HCT116 (cell line): ENCODE measurements at regions of chr4 and their contacts with region 1.

Region 1: DNA sequence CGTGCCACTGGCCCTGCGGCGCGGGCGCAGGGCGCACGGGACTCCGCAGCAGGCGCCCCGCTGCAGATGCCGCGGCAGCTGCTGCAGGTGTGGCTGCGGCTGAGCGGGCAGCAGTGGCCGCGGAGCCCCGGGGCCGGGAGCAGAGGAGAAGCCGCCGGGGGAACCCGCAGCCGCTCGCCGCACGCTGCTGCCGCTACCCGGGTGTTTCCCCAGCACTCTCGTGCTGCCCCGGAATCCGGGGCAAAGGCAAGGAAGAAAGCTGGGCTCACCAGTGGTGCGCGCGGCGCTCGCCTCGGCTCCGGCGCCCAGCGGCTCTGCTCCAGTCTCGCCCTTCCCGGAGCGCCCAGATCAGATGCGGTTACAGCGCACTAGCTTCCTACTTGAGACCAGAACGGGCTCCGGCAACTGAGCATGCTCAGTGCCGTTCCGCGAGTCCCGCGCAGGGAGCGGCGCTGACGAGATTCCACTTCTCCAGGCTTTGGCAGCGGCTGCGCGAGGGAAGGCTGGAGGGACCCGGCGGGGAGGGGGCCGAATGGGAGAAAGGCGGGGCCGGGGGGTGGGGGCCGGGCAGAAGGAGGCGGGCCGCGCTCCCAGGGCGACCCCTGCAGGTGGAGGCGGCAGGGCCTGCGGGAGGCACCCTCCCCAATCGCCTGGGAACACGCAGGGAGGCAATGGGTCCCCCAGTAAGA is at the start of gene APBB2:
- DNase-seq: peak; percentile 93
- ATAC-seq: peak; percentile 78
- H3K4me3 ChIP-seq: peak within 1 kb of the TSS; percentile 91 to 92
- H3K27ac ChIP-seq: peak within 1 kb of the TSS; percentile 82
- H3K4me1 ChIP-seq: peaks cover 36 to 56% of the 10 kb centered on the region in 2 experiments
- H3K27me3 ChIP-seq: no peaks in the 10 kb centered on the region
- CTCF ChIP-seq: peak in 2 of 3 experiments; percentile 70 to 77; a peak in 4 of 6 replicates
- POLR2A ChIP-seq: peak; percentile 92
- RAD21 ChIP-seq: no peak
- total RNA-seq, gene APBB2: 72.5 TPM

Region 2: DNA sequence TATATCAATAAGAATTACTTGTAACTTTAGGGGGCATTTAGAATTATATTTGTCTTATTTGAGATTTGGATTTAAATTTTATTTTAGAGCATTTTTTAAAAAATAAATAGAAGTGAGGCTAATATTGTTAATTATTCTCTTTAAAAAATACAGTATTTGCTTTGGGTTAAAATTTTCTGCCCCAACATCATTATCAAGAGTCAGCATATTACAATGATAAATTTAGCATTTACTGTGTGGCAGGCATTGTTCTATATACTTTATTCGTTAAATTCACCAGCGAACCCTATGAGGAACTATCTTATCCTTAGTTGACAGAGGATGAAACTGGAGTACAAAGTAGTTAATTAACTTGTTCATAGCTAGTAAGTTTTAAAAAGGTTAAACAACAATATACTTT is 1482.4 kb before region 1 on chr4:
- CTCF ChIA-PET with region 1: no interaction called
- POLR2A ChIA-PET with region 1: no interaction called
- RAD21 ChIA-PET with region 1: interaction called in 1 of 2 experiments, 10 read pairs
- intact Hi-C with region 1: no loop called
- DNase-seq: no peak
- ATAC-seq: no peak
- H3K4me3 ChIP-seq: no peak overlapping the region
- H3K27ac ChIP-seq: no peak overlapping the region
- H3K4me1 ChIP-seq: peaks cover 0 to 10% of the 10 kb centered on the region in 2 experiments; a peak in 2 of 4 replicates
- H3K27me3 ChIP-seq: no peaks in the 10 kb centered on the region
- CTCF ChIP-seq: no peak
- POLR2A ChIP-seq: no peak
- RAD21 ChIP-seq: no peak

Region 3: GRCh38 chr4:40736910-40737309 is 477.4 kb before region 1 on chr4:
- CTCF ChIA-PET with region 1: no interaction called
- POLR2A ChIA-PET with region 1: no interaction called
- RAD21 ChIA-PET with region 1: no interaction called
- intact Hi-C with region 1: loop called (anchors 10 kb)
- DNase-seq: peak; percentile 31
- ATAC-seq: peak; percentile 49
- H3K4me3 ChIP-seq: no peak overlapping the region
- H3K27ac ChIP-seq: no peak overlapping the region
- H3K4me1 ChIP-seq: no peaks in the 10 kb centered on the region
- H3K27me3 ChIP-seq: no peaks in the 10 kb centered on the region
- CTCF ChIP-seq: peak; percentile 22 to 70 (median 45); a peak in 4 of 6 replicates
- POLR2A ChIP-seq: no peak
- RAD21 ChIP-seq: peak; percentile 83

Region 4: GRCh38 chr4:40908702-40909362 is 305.4 kb before region 1 on chr4:
- CTCF ChIA-PET with region 1: interaction called, 9 read pairs
- POLR2A ChIA-PET with region 1: interaction called, 4 read pairs
- RAD21 ChIA-PET with region 1: no interaction called
- intact Hi-C with region 1: loop called (anchors 1 kb)
- DNase-seq: peak; percentile 86
- ATAC-seq: peak; percentile 89
- H3K4me3 ChIP-seq: peak overlapping the region; percentile 15 to 49
- H3K27ac ChIP-seq: peak overlapping the region; percentile 78
- H3K4me1 ChIP-seq: peaks cover 33 to 40% of the 10 kb centered on the region in 2 experiments
- H3K27me3 ChIP-seq: no peaks in the 10 kb centered on the region
- CTCF ChIP-seq: peak in 2 of 3 experiments; percentile 98; a peak in 4 of 6 replicates
- POLR2A ChIP-seq: no peak
- RAD21 ChIP-seq: no peak

Region 5: GRCh38 chr4:40924096-40924792 is 290.0 kb before region 1 on chr4:
- CTCF ChIA-PET with region 1: interaction called, 13 read pairs
- POLR2A ChIA-PET with region 1: interaction called, 5 read pairs
- RAD21 ChIA-PET with region 1: interaction called, 3 read pairs
- intact Hi-C with region 1: loop called (anchors 1 kb)
- DNase-seq: peak; percentile 32
- ATAC-seq: peak; percentile 78
- H3K4me3 ChIP-seq: no peak overlapping the region
- H3K27ac ChIP-seq: no peak overlapping the region
- H3K4me1 ChIP-seq: peaks cover 0 to 4% of the 10 kb centered on the region in 2 experiments; a peak in 2 of 4 replicates
- H3K27me3 ChIP-seq: no peaks in the 10 kb centered on the region
- CTCF ChIP-seq: peak; percentile 73 to 96 (median 93)
- POLR2A ChIP-seq: no peak
- RAD21 ChIP-seq: peak; percentile 75

Region 6: GRCh38 chr4:40976343-40976742 is 237.9 kb before region 1 on chr4:
- CTCF ChIA-PET with region 1: interaction called, 27 read pairs
- POLR2A ChIA-PET with region 1: interaction called, 6 read pairs
- RAD21 ChIA-PET with region 1: interaction called, 3 to 7 read pairs
- intact Hi-C with region 1: loop called (anchors 1 kb)
- DNase-seq: peak; percentile 51
- ATAC-seq: peak; percentile 75
- H3K4me3 ChIP-seq: no peak overlapping the region
- H3K27ac ChIP-seq: no peak overlapping the region
- H3K4me1 ChIP-seq: peaks cover 2 to 9% of the 10 kb centered on the region in 2 experiments; a peak in 3 of 4 replicates
- H3K27me3 ChIP-seq: no peaks in the 10 kb centered on the region
- CTCF ChIP-seq: peak; percentile 47 to 80 (median 70)
- POLR2A ChIP-seq: no peak
- RAD21 ChIP-seq: peak; percentile 72

Region 7: DNA sequence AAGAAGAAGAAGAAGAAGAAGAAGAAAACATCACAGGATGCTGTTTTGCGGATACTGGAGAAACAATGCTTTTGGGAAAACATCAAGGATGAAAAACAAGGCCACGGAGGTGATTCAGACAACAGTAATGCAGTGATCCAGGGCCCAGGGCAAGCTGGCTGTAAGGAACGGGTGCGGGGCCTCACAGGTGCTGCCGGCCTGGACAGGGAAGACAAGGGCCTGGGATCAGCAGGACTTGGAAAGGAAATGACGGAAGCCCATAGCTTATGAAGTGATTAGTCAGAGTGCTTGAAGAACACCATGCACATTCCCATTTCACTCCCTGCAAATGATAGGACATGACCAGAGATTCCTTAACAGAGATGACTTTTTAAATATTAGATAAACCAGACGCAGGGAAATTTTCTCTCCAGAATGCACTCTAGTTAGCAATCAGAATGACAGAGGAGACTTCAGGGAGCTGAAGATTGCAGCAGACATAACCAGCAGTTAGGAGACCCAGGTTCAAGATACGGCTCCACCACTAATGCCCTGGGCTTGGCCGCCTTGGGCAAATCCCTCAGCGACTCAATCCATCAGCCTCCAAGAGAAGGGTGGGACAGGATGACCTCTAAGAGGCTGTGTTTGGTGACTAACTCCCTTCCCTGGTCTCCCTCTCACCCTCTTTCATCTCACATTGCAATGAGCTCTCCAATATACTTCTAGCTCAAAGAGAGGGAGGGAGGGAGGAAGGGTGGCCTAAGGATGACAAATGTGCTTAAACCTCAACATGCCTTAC is 54.1 kb before region 1 on chr4:
- CTCF ChIA-PET with region 1: interaction called, 15 read pairs
- POLR2A ChIA-PET with region 1: no interaction called
- RAD21 ChIA-PET with region 1: interaction called, 3 to 4 read pairs
- intact Hi-C with region 1: loop called (anchors 1 kb)
- DNase-seq: peak; percentile 93
- ATAC-seq: peak; percentile 82
- H3K4me3 ChIP-seq: peak overlapping the region; percentile 17 to 34; a peak in 3 of 4 replicates
- H3K27ac ChIP-seq: peak overlapping the region; percentile 88
- H3K4me1 ChIP-seq: peaks cover 74 to 100% of the 10 kb centered on the region in 2 experiments
- H3K27me3 ChIP-seq: no peaks in the 10 kb centered on the region
- CTCF ChIP-seq: no peak
- POLR2A ChIP-seq: no peak
- RAD21 ChIP-seq: peak; percentile 21; the same call in 1 of the 2 replicates